ENCODE measurements at regions of chr11 and their contacts with region 1.

Region 1: GRCh38 chr11:33736148-33736809 is at the start of gene CD59:
- DNase-seq: peak; percentile 96
- H3K4me3 Mint-ChIP-seq: peak within 1 kb of the TSS; percentile 88
- H3K27ac Mint-ChIP-seq: peak within 1 kb of the TSS; percentile 90
- H3K4me1 Mint-ChIP-seq: peaks cover 49% of the 10 kb centered on the region
- H3K27me3 Mint-ChIP-seq: no peaks in the 10 kb centered on the region
- CTCF ChIP-seq: no peak
- total RNA-seq, gene CD59: 597 and 618 TPM in 2 replicates

Region 2: GRCh38 chr11:33168709-33169200 is 567.5 kb before region 1 on chr11:
- CTCF ChIA-PET with region 1: no interaction called
- POLR2A ChIA-PET with region 1: no interaction called
- intact Hi-C with region 1: loop called (anchors 5 kb)
- DNase-seq: no peak
- H3K4me3 Mint-ChIP-seq: no peak overlapping the region
- H3K27ac Mint-ChIP-seq: no peak overlapping the region
- H3K4me1 Mint-ChIP-seq: peaks cover 6% of the 10 kb centered on the region
- H3K27me3 Mint-ChIP-seq: no peaks in the 10 kb centered on the region
- CTCF ChIP-seq: no peak

Region 3: GRCh38 chr11:33700425-33701271 is 35.6 kb before region 1 on chr11 and contains the start of gene C11orf91:
- CTCF ChIA-PET with region 1: interaction called, 11 read pairs
- POLR2A ChIA-PET with region 1: interaction called, 70 read pairs
- intact Hi-C with region 1: no loop called
- DNase-seq: peak; percentile 94
- H3K4me3 Mint-ChIP-seq: peak within 1 kb of the TSS; percentile 79
- H3K27ac Mint-ChIP-seq: peak within 1 kb of the TSS; percentile 92
- H3K4me1 Mint-ChIP-seq: peaks cover 45% of the 10 kb centered on the region
- H3K27me3 Mint-ChIP-seq: no peaks in the 10 kb centered on the region
- CTCF ChIP-seq: no peak
- total RNA-seq, gene C11orf91: 2.8 and 2.9 TPM in 2 replicates

Region 4: DNA sequence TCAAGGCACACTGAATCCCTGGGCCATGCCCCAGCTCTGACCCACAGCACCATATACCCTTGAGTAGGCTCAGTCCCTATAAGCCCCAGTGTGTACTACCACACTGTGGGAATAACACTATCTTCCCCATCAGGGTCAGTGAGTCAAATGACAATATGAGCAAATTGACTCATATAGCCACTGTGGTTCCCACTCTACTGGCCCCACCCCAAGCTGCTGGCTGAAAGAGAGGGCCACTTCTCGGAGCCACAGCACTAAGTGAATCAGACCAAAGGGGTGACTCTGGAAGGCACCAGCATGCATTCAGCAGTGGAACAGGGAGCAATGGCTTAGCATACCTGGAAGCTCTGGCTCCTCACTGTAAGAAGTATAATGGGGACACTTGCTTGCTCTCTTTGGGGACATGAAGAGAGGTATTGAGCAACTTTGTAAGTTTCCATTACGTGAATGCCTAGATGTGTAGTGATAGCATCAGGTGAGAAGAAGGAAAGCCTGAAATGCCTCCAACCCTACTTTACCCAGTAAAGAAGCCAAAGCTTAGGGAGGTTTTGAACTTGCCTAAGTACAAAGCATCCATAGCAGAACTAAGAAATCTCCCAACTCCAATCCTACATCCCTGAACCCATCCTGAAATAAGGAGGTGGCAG is 13.6 kb before region 1 on chr11:
- CTCF ChIA-PET with region 1: interaction called, 78 read pairs
- POLR2A ChIA-PET with region 1: interaction called, 409 read pairs
- intact Hi-C with region 1: no loop called
- DNase-seq: peak; percentile 83
- H3K4me3 Mint-ChIP-seq: peak overlapping the region; percentile 63
- H3K27ac Mint-ChIP-seq: peak overlapping the region; percentile 93
- H3K4me1 Mint-ChIP-seq: peaks cover 68% of the 10 kb centered on the region
- H3K27me3 Mint-ChIP-seq: no peaks in the 10 kb centered on the region
- CTCF ChIP-seq: no peak

Region 5: GRCh38 chr11:34492806-34493414 is 756.6 kb after region 1 on chr11:
- CTCF ChIA-PET with region 1: no interaction called
- POLR2A ChIA-PET with region 1: no interaction called
- intact Hi-C with region 1: loop called (anchors 5 kb)
- DNase-seq: peak; percentile 76
- H3K4me3 Mint-ChIP-seq: no peak overlapping the region
- H3K27ac Mint-ChIP-seq: no peak overlapping the region
- H3K4me1 Mint-ChIP-seq: no peaks in the 10 kb centered on the region
- H3K27me3 Mint-ChIP-seq: no peaks in the 10 kb centered on the region
- CTCF ChIP-seq: peak; percentile 56